ENCODE measurements at regions of chr17 and their contacts with region 1.

Region 1: DNA sequence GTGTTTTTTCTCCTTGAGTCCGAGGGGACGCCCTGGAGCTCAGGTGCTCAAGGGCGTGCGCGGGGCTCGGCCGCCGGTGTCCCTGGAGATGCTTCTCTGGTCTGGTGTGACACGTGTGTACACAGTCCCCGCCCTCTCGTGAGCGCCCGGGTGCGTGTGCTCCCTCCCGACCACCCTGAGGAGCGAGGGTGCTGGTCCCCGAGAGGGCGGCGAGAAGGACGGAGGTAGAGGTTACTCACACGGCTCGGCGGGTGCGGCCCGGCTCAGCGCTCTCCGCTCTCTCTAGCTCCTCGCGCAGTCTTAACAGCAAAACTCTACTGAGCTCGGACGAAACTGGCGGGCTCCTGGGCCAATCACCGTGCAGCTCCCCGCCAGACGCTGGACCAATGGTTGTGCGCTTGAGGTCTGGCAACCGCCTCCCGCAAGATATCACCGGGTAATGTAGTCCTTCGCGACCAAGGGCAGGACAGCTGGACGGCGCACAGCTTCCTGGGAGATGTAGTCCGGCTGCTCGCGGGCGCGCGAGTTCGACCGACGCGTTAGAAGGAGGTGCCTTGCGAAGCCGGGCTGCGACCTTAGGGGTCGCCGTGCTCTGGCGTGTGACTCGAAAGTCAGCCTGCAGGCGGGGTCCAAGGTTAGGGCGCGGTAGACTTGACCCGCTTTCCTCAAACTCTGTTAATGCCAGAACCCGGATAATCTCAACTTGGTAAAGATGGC is at the start of gene SLC25A19:
- DNase-seq: peak; percentile 94 to 99
- ATAC-seq: peak; percentile 87 to 97 (median 93)
- H3K4me3 ChIP-seq: peak within 1 kb of the TSS; percentile 56
- H3K4me3 Mint-ChIP-seq: peak within 1 kb of the TSS; percentile 100
- H3K27ac ChIP-seq: peak within 1 kb of the TSS; percentile 85
- H3K27ac Mint-ChIP-seq: peak within 1 kb of the TSS; percentile 100
- H3K4me1 ChIP-seq: peaks cover 13% of the 10 kb centered on the region
- H3K4me1 Mint-ChIP-seq: peaks cover 15 to 19% of the 10 kb centered on the region in 2 donors
- H3K27me3 ChIP-seq: no peaks in the 10 kb centered on the region
- H3K27me3 Mint-ChIP-seq: no peaks in the 10 kb centered on the region
- CTCF ChIP-seq: no peak
- total RNA-seq, gene SLC25A19: 12.1 to 17.7 (median 14.8) TPM

Region 2: DNA sequence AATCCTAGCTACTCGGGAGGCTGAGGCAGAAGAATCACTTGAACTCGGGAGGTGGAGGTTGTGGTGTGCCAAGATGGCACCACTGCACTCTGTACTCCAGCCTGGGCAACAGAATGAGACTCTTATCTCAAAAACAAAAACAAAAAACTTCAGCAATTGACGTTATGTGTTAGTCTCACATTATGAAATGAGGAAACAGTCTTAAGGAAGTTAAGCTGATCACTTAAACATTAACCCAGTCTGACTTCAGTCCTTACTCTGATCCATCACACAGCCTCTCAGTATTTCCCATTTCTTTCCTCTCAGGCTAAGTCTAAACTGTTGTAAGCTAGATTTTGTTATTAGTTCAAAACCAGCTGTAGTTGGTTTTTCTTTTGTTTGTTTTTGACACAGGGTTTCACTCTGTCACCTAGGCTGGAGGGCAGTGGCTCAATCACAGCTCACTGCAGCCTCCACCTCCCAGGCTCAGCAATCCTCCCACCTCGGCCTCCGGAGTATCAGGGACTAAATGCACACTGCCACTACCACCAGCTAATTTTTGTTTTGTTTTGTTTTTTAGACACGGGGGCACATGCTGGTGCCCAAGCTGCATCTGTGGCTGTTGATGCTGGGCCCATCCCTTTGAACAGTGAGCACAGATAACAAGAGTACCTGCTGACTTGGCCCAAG is 141.3 kb before region 1 on chr17:
- intact Hi-C with region 1: no loop called
- DNase-seq: no peak
- ATAC-seq: no peak
- H3K4me3 ChIP-seq: no peak overlapping the region
- H3K4me3 Mint-ChIP-seq: no peak overlapping the region
- H3K27ac ChIP-seq: no peak overlapping the region
- H3K27ac Mint-ChIP-seq: no peak overlapping the region
- H3K4me1 ChIP-seq: peaks cover 6% of the 10 kb centered on the region
- H3K4me1 Mint-ChIP-seq: peaks cover 18 to 21% of the 10 kb centered on the region in 2 donors
- H3K27me3 ChIP-seq: no peaks in the 10 kb centered on the region
- H3K27me3 Mint-ChIP-seq: no peaks in the 10 kb centered on the region
- CTCF ChIP-seq: no peak

Region 3: GRCh38 chr17:75261336-75262111 is 27.7 kb before region 1 on chr17 and contains the starts of genes GGA3 and MRPS7:
- intact Hi-C with region 1: loop called (anchors 1 kb)
- DNase-seq: peak; percentile 95 to 97
- ATAC-seq: peak; percentile 93 to 98 (median 93)
- H3K4me3 ChIP-seq: peak within 1 kb of the TSS; percentile 80
- H3K4me3 Mint-ChIP-seq: peak within 1 kb of the TSS; percentile 97
- H3K27ac ChIP-seq: peak within 1 kb of the TSS; percentile 97
- H3K27ac Mint-ChIP-seq: peak within 1 kb of the TSS; percentile 99 to 100
- H3K4me1 ChIP-seq: peaks cover 23% of the 10 kb centered on the region
- H3K4me1 Mint-ChIP-seq: peaks cover 52 to 59% of the 10 kb centered on the region in 2 donors
- H3K27me3 ChIP-seq: no peaks in the 10 kb centered on the region
- H3K27me3 Mint-ChIP-seq: no peaks in the 10 kb centered on the region
- CTCF ChIP-seq: no peak
- total RNA-seq, gene GGA3: 78.1 to 97.3 (median 94.0) TPM
- total RNA-seq, gene MRPS7: 27.3 to 29.4 (median 27.9) TPM

Region 4: GRCh38 chr17:75319904-75320691 is 30.8 kb after region 1 on chr17:
- intact Hi-C with region 1: loop called (anchors 1 kb)
- DNase-seq: no peak
- ATAC-seq: no peak
- H3K4me3 ChIP-seq: no peak overlapping the region
- H3K4me3 Mint-ChIP-seq: no peak overlapping the region
- H3K27ac ChIP-seq: peak overlapping the region; percentile 51
- H3K27ac Mint-ChIP-seq: no peak overlapping the region
- H3K4me1 ChIP-seq: peaks cover 36% of the 10 kb centered on the region
- H3K4me1 Mint-ChIP-seq: peaks cover 7 to 12% of the 10 kb centered on the region in 2 donors
- H3K27me3 ChIP-seq: no peaks in the 10 kb centered on the region
- H3K27me3 Mint-ChIP-seq: no peaks in the 10 kb centered on the region
- CTCF ChIP-seq: no peak

Region 5: DNA sequence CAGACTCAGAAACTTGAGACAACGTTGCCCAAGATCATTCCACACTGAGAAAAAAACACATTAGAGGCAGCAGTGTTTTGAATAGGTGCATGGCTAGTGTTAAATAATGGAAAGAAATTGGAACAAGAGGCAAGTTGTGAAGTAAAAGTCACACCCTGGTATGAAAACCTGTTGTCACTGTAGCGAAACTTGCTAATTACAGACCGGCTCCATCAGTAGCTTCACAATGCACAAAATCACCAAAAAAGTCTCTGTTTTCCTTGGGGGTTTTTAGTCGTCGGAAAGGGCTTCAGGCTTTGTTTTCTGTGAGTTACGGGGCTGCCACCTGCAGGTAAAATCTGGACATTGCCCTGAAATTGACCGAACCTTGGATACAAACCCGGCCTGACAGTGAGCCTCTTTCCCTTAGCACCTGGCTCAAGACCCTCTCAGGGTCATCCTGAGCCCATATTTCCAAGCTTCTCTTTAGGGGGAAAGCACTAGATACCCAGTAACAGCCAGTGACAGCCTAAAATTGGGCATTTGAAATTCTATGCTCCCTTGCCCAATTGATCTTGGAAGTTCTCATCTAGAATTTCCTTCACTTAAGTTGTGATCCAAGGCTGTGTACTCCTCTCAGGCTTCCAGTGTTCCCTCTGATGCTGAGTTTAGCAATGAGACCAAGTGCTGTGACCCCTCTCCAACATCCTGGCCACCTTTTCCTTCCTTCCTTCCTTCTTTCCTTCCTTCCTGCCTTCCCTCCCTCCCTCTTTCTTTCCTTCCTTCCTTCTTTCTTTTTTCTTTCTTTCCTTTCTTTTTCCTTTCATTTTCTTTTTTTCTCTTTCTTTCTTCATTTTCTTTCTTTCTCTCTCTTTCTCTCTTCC is 123.4 kb after region 1 on chr17:
- intact Hi-C with region 1: loop called (anchors 1 kb)
- DNase-seq: peak; percentile 72 to 91
- ATAC-seq: peak; percentile 83 to 96 (median 86)
- H3K4me3 ChIP-seq: no peak overlapping the region
- H3K4me3 Mint-ChIP-seq: peak overlapping the region; percentile 71
- H3K27ac ChIP-seq: no peak overlapping the region
- H3K27ac Mint-ChIP-seq: peak overlapping the region; percentile 23 to 69
- H3K4me1 ChIP-seq: peaks cover 9% of the 10 kb centered on the region
- H3K4me1 Mint-ChIP-seq: peaks cover 23 to 28% of the 10 kb centered on the region in 2 donors
- H3K27me3 ChIP-seq: no peaks in the 10 kb centered on the region
- H3K27me3 Mint-ChIP-seq: peaks cover 0 to 6% of the 10 kb centered on the region in 2 donors
- CTCF ChIP-seq: peak; percentile 69

Region 6: DNA sequence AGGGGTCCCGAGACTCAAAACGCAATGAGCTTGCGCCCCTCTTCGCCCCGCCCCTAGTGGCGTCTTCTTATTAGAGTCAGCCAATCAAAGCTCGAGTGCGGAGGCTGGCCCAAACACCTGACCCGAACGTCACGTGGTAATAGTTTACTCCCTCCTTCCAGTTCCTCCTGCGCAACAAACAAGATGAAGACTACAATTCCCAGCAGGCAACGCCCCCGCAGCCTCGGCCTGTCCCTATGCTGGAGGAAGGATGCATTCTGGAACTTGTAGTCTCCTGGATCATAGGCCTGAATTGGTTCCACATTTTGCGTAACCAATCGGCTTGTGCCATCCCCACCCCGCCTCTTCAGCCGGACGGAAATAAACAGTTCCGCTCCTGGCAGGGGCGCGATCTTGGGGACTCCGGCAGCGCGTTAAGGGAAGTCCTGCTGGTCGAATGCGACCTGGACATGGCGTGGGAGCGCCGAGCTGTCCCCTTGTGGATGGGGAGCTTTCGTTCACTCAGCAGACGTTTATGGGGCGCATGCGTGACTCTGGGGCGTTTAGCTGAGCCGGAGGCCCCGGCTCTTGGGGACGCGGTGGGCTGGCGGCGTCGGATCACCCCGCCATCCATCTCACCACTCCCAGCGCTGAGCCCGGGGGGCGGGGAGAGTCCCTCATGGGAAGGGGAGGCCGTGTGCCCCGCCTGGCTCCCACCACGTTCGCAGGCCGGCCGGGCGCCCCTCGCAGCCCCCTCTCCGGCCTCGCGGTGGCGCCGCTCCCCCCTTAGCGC is 566.2 kb after region 1 on chr17 and contains the start of gene WBP2:
- intact Hi-C with region 1: loop called (anchors 1 kb)
- DNase-seq: peak; percentile 92 to 100
- ATAC-seq: peak; percentile 91 to 98 (median 91)
- H3K4me3 ChIP-seq: peak within 1 kb of the TSS; percentile 96
- H3K4me3 Mint-ChIP-seq: no peak within 1 kb of the TSS
- H3K27ac ChIP-seq: peak within 1 kb of the TSS; percentile 96
- H3K27ac Mint-ChIP-seq: no peak within 1 kb of the TSS
- H3K4me1 ChIP-seq: peaks cover 43% of the 10 kb centered on the region
- H3K4me1 Mint-ChIP-seq: peaks cover 7 to 27% of the 10 kb centered on the region in 2 donors
- H3K27me3 ChIP-seq: no peaks in the 10 kb centered on the region
- H3K27me3 Mint-ChIP-seq: no peaks in the 10 kb centered on the region
- CTCF ChIP-seq: peak; percentile 24
- total RNA-seq, gene WBP2: 81.1 to 106 (median 95.2) TPM

Measured in natural killer cell (primary cell).